ENCODE measurements at regions of chr5 and their contacts with region 1.

Region 1: GRCh38 chr5:33595308-33595707 is 154.5 kb downstream of the TARS1 start:
- DNase-seq: no peak
- H3K4me3 ChIP-seq: no peak overlapping the region
- H3K4me3 Mint-ChIP-seq: no peak overlapping the region
- H3K27ac Mint-ChIP-seq: no peak overlapping the region
- H3K4me1 ChIP-seq: no peaks in the 10 kb centered on the region
- H3K4me1 Mint-ChIP-seq: no peaks in the 10 kb centered on the region
- H3K27me3 ChIP-seq: no peaks in the 10 kb centered on the region
- H3K27me3 Mint-ChIP-seq: peaks cover 21% of the 10 kb centered on the region
- CTCF ChIP-seq: no peak

Region 2: GRCh38 chr5:33470544-33470943 is 124.8 kb before region 1 on chr5:
- CTCF ChIA-PET with region 1: interaction called, 3 read pairs
- POLR2A ChIA-PET with region 1: no interaction called
- intact Hi-C with region 1: loop called (anchors 2 kb)
- DNase-seq: peak in 1 of 2 experiments; percentile 39
- H3K4me3 ChIP-seq: no peak overlapping the region
- H3K4me3 Mint-ChIP-seq: no peak overlapping the region
- H3K27ac Mint-ChIP-seq: no peak overlapping the region
- H3K4me1 ChIP-seq: no peaks in the 10 kb centered on the region
- H3K4me1 Mint-ChIP-seq: no peaks in the 10 kb centered on the region
- H3K27me3 ChIP-seq: no peaks in the 10 kb centered on the region
- H3K27me3 Mint-ChIP-seq: no peaks in the 10 kb centered on the region
- CTCF ChIP-seq: peak in 1 of 2 experiments; percentile 50

Measured in Caco-2 (cell line).